ENCODE measurements at regions of chr11 and their contacts with region 1.

Region 1: GRCh38 chr11:31045335-31045734 is 324.2 kb downstream of the DCDC1 start:
- DNase-seq: peak; percentile 10
- ATAC-seq: no peak
- H3K4me3 ChIP-seq: no peak overlapping the region
- H3K27ac ChIP-seq: no peak overlapping the region
- H3K4me1 ChIP-seq: no peaks in the 10 kb centered on the region
- H3K27me3 ChIP-seq: no peaks in the 10 kb centered on the region; the same call in 1 of the 2 replicates
- CTCF ChIP-seq: peak; percentile 20 to 58 (median 32); a peak in 4 of 6 replicates
- POLR2A ChIP-seq: no peak
- RAD21 ChIP-seq: no peak

Region 2: GRCh38 chr11:31060880-31061279 is 15.5 kb after region 1 on chr11:
- CTCF ChIA-PET with region 1: interaction called, 5 read pairs
- POLR2A ChIA-PET with region 1: no interaction called
- RAD21 ChIA-PET with region 1: no interaction called
- intact Hi-C with region 1: loop called (anchors 1 kb)
- DNase-seq: no peak
- ATAC-seq: no peak
- H3K4me3 ChIP-seq: no peak overlapping the region
- H3K27ac ChIP-seq: no peak overlapping the region
- H3K4me1 ChIP-seq: no peaks in the 10 kb centered on the region
- H3K27me3 ChIP-seq: no peaks in the 10 kb centered on the region
- CTCF ChIP-seq: no peak
- POLR2A ChIP-seq: no peak
- RAD21 ChIP-seq: no peak